Naive thymus-derived CD8-positive, alpha-beta T cell (primary cell): ENCODE measurements at regions of chr11 and their contacts with region 1.

Region 1: DNA sequence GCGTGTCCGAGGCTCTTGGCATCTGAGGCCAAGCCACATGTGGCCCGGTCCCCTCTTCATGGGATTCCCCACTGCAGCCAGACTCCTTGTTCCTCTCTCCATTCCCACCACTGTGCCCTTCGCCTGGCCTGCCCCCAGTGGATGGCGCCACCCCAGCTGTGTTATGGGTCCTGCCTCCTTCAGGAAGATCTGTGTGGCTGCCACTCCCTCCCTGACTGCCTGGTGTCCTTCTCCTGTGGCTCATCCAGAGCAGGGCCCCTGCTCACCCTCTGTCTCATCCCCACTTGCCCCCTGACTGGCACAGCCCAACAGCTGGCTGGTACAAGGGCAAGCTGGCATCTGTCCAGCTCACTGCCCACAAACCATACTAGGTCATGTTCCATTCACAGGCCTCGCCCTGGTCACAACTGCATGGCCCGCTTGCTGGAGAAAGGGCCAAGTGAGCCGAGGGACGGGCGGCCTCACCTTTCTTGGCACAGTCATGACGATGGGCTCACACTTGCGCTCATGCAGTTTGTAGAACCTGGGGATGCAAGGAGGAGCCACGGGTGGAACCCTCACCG is 1.9 kb upstream of the PTPRCAP start:
- DNase-seq: peak in 4 of 10 donors; percentile 22 to 35 (median 26)
- ATAC-seq: no peak
- H3K4me3 Mint-ChIP-seq: peak overlapping the region; percentile 82 to 100 (median 96)
- H3K27ac Mint-ChIP-seq: peak overlapping the region; percentile 87 to 97 (median 94)
- H3K4me1 Mint-ChIP-seq: peaks cover 31 to 79% (median 67%) of the 10 kb centered on the region in 4 donors
- H3K27me3 Mint-ChIP-seq: no peaks in the 10 kb centered on the region

Region 2: GRCh38 chr11:67391304-67392132 is 47.9 kb before region 1 on chr11 and contains the start of gene RAD9A:
- POLR2A ChIA-PET with region 1: interaction called, 2,390 read pairs
- DNase-seq: peak; percentile 85 to 95 (median 90)
- ATAC-seq: peak; percentile 81 to 84
- H3K4me3 Mint-ChIP-seq: peak within 1 kb of the TSS; percentile 81 to 90 (median 87)
- H3K27ac Mint-ChIP-seq: peak within 1 kb of the TSS; percentile 68 to 93 (median 88)
- H3K4me1 Mint-ChIP-seq: peaks cover 30 to 47% (median 43%) of the 10 kb centered on the region in 4 donors
- H3K27me3 Mint-ChIP-seq: no peaks in the 10 kb centered on the region
- polyA plus RNA-seq, gene RAD9A: 6.5 to 9.4 (median 6.6) TPM

Region 3: DNA sequence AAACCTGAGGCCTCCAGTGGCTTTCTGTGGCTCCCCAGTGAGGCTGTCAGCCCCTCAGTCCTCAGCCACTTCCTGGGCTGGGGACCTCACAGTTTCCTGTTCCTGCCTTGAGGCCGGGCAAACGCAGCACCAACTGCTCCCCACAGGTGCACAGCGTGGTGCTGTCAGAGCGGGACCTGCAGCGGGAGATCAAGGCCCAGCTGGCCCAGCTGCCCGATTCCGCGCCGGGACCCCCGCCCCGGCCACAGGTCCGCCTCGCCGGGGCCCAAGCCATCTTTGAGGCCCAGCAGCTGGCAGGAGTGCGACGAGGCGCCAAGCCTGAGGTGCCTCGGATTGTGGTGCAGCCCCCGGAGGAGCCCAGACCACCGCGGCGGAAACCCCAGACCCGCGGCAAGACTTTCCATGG is 30.1 kb before region 1 on chr11:
- POLR2A ChIA-PET with region 1: interaction called, 2,390 read pairs
- DNase-seq: peak; percentile 46 to 90 (median 76)
- ATAC-seq: peak; percentile 73 to 85
- H3K4me3 Mint-ChIP-seq: peak overlapping the region; percentile 93 to 99 (median 98)
- H3K27ac Mint-ChIP-seq: peak overlapping the region; percentile 53 to 98 (median 94)
- H3K4me1 Mint-ChIP-seq: peaks cover 44 to 96% (median 88%) of the 10 kb centered on the region in 4 donors
- H3K27me3 Mint-ChIP-seq: no peaks in the 10 kb centered on the region

Region 4: DNA sequence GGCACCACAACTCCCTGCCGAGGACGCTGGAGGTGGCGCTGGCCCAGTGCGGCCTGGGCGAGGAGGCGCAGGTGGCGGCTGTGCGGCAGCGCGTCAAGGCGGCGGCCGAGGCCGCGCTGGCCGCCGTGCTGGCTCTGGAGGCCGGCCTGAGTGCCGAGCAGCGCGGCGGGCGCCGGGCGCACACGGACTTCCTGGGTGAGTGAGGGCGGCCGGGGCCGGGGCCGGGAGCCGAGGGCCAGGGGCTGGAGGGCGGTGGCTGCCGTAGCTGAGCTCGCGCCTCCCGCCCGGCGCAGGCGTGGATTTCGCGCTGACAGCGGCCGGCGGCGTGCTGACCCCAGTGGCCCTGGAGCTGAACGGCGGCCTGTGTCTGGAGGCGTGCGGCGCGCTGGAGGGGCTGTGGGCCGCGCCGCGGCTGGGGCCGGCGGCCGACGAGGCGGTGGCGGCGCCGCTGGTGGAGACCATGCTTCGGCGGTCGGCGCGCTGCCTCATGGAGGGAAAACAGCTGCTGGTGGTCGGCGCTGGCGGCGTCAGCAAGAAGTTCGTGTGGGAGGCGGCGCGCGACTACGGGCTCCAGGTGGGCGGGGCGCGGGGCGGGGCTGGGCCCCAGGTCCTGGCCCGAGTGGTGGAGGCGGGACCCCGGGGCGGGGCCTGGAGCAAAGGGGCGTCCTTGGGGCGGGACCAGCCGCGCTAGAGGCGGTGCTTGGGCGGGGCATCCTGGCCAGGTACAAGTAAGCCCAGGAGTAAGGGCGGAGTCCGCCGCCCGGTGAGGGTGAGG is 18.6 kb before region 1 on chr11:
- POLR2A ChIA-PET with region 1: interaction called, 1,094 read pairs
- DNase-seq: peak; percentile 97 to 100 (median 99)
- ATAC-seq: peak; percentile 64 to 76
- H3K4me3 Mint-ChIP-seq: peak overlapping the region; percentile 76 to 94 (median 86)
- H3K27ac Mint-ChIP-seq: peak overlapping the region; percentile 80 to 100 (median 93)
- H3K4me1 Mint-ChIP-seq: peaks cover 23 to 67% (median 58%) of the 10 kb centered on the region in 4 donors
- H3K27me3 Mint-ChIP-seq: no peaks in the 10 kb centered on the region

Region 5: DNA sequence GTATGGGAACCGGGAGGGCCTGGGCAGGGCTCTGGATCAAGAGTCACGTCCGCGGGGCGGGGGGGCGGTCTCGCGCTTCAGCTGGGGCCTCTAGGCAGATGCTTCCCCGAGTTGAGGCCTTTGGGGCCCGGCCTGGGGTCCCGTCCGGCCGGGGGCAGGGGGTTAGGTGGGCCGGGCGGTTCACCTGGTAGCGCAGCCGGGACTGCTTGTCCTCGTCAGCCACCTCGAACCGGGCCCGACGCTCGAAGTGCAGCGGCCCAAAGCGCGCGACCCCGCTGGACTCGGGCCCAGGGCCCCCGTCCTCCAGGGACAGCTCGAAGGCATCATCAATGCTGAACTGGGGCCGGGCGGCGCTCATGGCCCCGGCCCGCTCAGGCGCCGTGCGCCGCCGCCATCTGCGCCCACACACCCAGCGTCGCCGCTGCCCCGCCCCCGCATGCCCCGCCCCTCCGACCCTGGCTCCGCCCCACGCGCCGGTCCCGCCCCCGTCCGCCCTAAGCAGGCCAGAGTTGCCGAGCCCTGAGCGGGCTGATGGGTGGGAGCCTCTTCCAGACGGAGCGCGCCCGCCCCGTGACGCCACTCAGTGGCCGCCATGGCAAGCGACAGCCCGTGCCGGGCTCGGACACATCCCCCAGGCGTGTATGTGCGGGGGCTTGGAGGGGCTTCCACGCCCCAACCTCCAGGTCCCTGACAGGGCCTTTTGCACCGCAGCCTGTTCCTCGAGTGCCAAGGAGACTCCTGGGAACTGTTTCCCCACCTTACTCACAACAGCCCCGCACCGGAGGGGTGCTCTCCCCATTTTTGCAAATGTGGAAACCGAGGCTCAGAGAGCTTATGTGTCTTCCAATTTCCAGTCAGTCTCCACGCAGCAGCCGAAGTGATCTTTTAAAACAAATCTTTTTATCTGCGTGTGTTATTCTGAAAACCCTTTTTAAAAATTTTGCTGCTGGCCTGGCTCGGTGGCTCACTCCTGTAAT is 29.7 kb after region 1 on chr11 and contains the start of gene TMEM134:
- POLR2A ChIA-PET with region 1: interaction called, 780 read pairs
- DNase-seq: peak; percentile 85 to 96 (median 88)
- ATAC-seq: peak; percentile 74 to 79
- H3K4me3 Mint-ChIP-seq: peak within 1 kb of the TSS; percentile 83 to 93 (median 90)
- H3K27ac Mint-ChIP-seq: peak within 1 kb of the TSS; percentile 84 to 96 (median 92)
- H3K4me1 Mint-ChIP-seq: peaks cover 13 to 40% (median 37%) of the 10 kb centered on the region in 4 donors
- H3K27me3 Mint-ChIP-seq: no peaks in the 10 kb centered on the region
- polyA plus RNA-seq, gene TMEM134: 128 to 148 (median 144) TPM

Region 6: GRCh38 chr11:67507864-67508485 is 68.6 kb after region 1 on chr11 and contains the start of gene CDK2AP2:
- POLR2A ChIA-PET with region 1: interaction called, 28 read pairs
- DNase-seq: peak in 9 of 10 donors; percentile 92 to 99 (median 96)
- ATAC-seq: peak; percentile 74
- H3K4me3 Mint-ChIP-seq: peak within 1 kb of the TSS; percentile 81 to 94 (median 92)
- H3K27ac Mint-ChIP-seq: peak within 1 kb of the TSS; percentile 83 to 99 (median 97)
- H3K4me1 Mint-ChIP-seq: peaks cover 26 to 47% (median 39%) of the 10 kb centered on the region in 4 donors
- H3K27me3 Mint-ChIP-seq: peaks cover 0 to 5% (median under 1%) of the 10 kb centered on the region in 5 donors
- polyA plus RNA-seq, gene CDK2AP2: 75.9 to 96.8 (median 79.5) TPM

Region 7: GRCh38 chr11:67523556-67524479 is 84.4 kb after region 1 on chr11:
- POLR2A ChIA-PET with region 1: no interaction called
- DNase-seq: no peak
- ATAC-seq: no peak
- H3K4me3 Mint-ChIP-seq: no peak overlapping the region
- H3K27ac Mint-ChIP-seq: no peak overlapping the region
- H3K4me1 Mint-ChIP-seq: no peaks in the 10 kb centered on the region
- H3K27me3 Mint-ChIP-seq: peaks cover 0 to 19% (median 5%) of the 10 kb centered on the region in 5 donors